H1 (cell line): ENCODE measurements at regions of chr6 and their contacts with region 1.

Region 1: DNA sequence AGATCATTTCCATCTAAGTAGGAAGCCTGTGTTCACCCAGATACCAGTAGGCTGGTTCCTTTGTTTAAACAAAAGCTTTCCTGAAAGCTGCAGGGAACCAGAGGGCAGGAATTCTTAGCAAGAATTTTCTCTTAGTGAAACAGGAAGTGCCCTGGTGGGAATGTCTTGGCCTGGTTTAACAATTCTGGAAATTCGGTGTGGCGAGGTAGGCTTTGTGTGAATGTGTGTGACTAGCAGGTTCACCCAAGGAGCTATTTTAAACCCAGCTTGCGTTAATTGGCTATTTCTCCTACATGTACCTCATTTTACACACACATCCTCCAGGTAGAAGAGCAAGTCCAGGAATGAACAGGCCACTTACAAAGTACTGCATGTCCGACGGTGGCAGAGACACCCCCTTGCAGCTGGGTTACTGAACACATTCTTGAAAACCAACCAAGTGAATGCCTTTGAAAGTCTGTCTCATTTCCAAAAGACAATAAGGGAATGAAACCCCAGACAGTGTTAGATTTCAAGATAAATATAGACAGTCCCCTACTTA is 64.6 kb downstream of the GFOD1 start:
- DNase-seq: peak in 1 of 2 experiments; percentile 77
- H3K4me3 ChIP-seq: peak overlapping the region in 1 of 4 experiments; percentile 37; a peak in 1 of 8 replicates
- H3K27ac ChIP-seq: peak overlapping the region; percentile 84
- H3K4me1 ChIP-seq: peaks cover 14 to 23% (median 18%) of the 10 kb centered on the region in 4 experiments
- H3K27me3 ChIP-seq: no peaks in the 10 kb centered on the region
- CTCF ChIP-seq: no peak
- EP300 ChIP-seq: peak in 1 of 2 experiments; percentile 90; a peak in 1 of 3 replicates
- POLR2A ChIP-seq: no peak
- RAD21 ChIP-seq: peak in 1 of 2 experiments; percentile 6; a peak in 2 of 4 replicates

Region 2: DNA sequence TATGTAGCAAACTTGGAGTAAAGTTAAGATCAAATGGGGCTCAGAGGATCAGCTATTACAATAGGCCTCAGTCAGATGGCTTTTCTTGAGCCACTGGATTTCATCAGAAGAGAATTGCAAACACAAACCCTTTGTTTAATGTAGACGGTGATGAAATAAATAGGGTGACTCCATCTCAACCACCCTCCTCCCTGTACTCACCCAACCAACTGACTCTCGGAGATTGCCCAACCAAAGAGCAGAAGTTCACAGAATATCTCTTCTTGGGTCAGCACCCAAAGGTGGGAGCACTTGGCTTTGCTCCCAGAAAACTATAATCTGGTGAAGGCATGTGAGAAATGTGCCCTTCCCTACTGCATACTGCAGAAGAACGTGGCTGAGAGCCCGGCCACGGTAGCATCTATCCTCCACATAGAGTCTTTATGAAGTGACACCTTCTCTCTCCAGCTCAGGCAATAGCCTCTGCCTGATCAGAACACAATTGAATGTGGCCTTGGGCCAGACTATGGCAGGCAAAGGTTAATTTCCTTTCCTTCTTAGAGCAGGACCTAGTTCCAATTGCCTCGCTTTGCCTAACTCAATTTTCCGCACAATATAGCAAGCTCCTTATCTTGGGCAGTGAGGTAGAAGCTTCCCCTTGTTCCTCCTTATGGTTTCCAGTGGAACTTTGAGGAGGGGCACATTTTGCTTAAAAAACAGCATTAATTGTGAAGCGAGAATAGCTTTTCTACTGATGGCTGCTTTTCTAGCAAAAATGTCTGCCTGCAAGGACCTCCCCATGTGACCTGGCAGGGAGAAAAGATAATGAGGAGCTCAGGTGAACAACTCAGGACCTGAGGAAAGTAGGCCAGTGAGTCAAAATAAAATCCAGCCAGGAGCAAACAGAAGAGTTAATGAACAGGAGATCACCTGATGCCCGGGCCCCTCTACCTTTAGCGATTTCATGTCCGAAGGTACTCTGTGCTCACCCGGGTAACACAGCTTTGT is 14.7 kb before region 1 on chr6:
- CTCF ChIA-PET with region 1: interaction called, 12 read pairs
- POLR2A ChIA-PET with region 1: interaction called, 13 read pairs
- DNase-seq: no peak
- H3K4me3 ChIP-seq: no peak overlapping the region
- H3K27ac ChIP-seq: no peak overlapping the region
- H3K4me1 ChIP-seq: peaks cover 0 to 7% (median 3%) of the 10 kb centered on the region in 4 experiments; a peak in 4 of 7 replicates
- H3K27me3 ChIP-seq: no peaks in the 10 kb centered on the region
- CTCF ChIP-seq: no peak
- EP300 ChIP-seq: no peak
- POLR2A ChIP-seq: no peak
- RAD21 ChIP-seq: no peak